SK-N-SH (cell line): ENCODE measurements at regions of chr7 and their contacts with region 1.

Region 1: GRCh38 chr7:92415225-92415624 is 32.1 kb upstream of the GATAD1 start:
- DNase-seq: no peak
- H3K4me3 ChIP-seq: no peak overlapping the region
- H3K27ac ChIP-seq: no peak overlapping the region
- H3K4me1 ChIP-seq: no peaks in the 10 kb centered on the region
- H3K27me3 ChIP-seq: no peaks in the 10 kb centered on the region
- CTCF ChIP-seq: no peak
- EP300 ChIP-seq: no peak
- RAD21 ChIP-seq: no peak

Region 2: DNA sequence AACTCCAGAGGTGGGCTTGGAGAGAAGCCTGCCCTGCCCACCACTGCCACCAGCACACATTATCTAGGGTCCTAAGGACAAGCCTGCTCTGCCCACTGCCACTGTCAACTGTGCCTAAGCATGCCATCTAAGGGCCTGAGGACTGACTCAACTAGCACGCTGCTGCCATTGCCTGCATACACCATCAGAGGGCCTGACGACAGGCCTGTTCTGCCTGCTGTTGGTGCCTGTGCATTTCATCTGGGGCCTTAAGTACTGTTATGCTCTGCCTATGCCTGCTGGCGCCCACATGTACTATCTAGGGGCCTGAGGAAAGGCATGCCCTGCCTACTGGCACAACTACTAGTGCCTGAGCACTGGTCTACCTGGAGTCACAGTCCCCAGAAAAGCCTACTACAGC is 209.2 kb before region 1 on chr7:
- CTCF ChIA-PET with region 1: no interaction called
- POLR2A ChIA-PET with region 1: no interaction called
- DNase-seq: no peak
- H3K4me3 ChIP-seq: no peak overlapping the region
- H3K27ac ChIP-seq: no peak overlapping the region
- H3K4me1 ChIP-seq: no peaks in the 10 kb centered on the region
- H3K27me3 ChIP-seq: no peaks in the 10 kb centered on the region
- CTCF ChIP-seq: no peak
- EP300 ChIP-seq: no peak
- RAD21 ChIP-seq: no peak

Region 3: GRCh38 chr7:92404170-92404614 is 11.0 kb before region 1 on chr7:
- CTCF ChIA-PET with region 1: interaction called, 11 read pairs
- POLR2A ChIA-PET with region 1: interaction called, 3 read pairs
- DNase-seq: no peak
- H3K4me3 ChIP-seq: no peak overlapping the region
- H3K27ac ChIP-seq: no peak overlapping the region
- H3K4me1 ChIP-seq: no peaks in the 10 kb centered on the region
- H3K27me3 ChIP-seq: no peaks in the 10 kb centered on the region
- CTCF ChIP-seq: peak; percentile 15; the same call in 1 of the 2 replicates
- EP300 ChIP-seq: no peak
- RAD21 ChIP-seq: peak; percentile 9; the same call in 1 of the 2 replicates

Region 4: GRCh38 chr7:92631067-92631849 is 216.0 kb after region 1 on chr7:
- CTCF ChIA-PET with region 1: no interaction called
- POLR2A ChIA-PET with region 1: no interaction called
- DNase-seq: no peak
- H3K4me3 ChIP-seq: no peak overlapping the region
- H3K27ac ChIP-seq: peak overlapping the region; percentile 93 to 98
- H3K4me1 ChIP-seq: peaks cover 35 to 49% of the 10 kb centered on the region in 2 experiments
- H3K27me3 ChIP-seq: no peaks in the 10 kb centered on the region
- CTCF ChIP-seq: no peak
- EP300 ChIP-seq: no peak
- RAD21 ChIP-seq: no peak